Keratinocyte (primary cell): ENCODE measurements at regions of chr6 and their contacts with region 1.

Region 1: GRCh38 chr6:3410385-3411360 is 46.2 kb downstream of the SLC22A23 start:
- DNase-seq: no peak
- H3K4me3 ChIP-seq: no peak overlapping the region
- H3K27ac ChIP-seq: no peak overlapping the region
- H3K4me1 ChIP-seq: no peaks in the 10 kb centered on the region
- H3K27me3 ChIP-seq: no peaks in the 10 kb centered on the region
- CTCF ChIP-seq: peak; percentile 81 to 86 (median 85)

Region 2: DNA sequence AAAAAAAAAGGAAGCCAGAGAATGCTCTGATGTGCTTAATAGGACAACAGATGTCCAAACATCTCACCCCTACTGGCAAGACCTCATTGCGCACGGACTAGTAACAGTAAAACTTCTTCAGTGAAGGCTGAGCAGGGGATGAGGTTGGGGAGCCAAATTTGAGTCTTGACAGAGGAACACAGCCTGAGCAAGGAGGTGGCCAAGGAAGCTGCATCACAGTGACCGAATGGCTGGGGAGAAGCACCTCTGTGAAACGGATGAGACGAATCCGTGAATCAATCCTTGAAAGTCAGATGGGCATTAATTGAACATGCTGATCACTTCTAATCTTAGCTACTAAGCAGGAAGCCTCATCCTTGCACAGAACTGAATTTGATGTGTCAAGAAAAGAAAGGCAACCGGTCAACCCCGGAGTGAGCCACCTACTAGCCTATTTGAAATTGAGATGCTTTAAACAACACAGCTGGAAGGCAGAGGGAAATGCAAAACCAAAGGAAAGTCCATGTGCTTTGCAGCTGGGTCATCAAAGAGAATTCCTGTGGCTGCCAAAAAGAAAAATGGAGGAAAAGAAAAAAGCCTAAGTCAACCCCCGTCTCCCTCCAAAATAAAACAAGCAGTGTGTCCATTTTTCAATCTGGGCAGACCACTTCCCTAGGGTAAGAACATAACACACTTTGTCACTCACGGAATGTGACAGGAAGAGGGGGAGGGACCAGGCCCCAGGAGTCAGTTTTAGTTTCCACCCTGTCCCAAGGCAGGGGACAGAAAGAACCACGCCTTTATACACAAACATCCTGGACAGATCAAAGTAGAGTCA is 311.3 kb after region 1 on chr6:
- dilution Hi-C with region 1: loop called (anchors 25 kb)
- DNase-seq: no peak
- H3K4me3 ChIP-seq: no peak overlapping the region
- H3K27ac ChIP-seq: no peak overlapping the region
- H3K4me1 ChIP-seq: no peaks in the 10 kb centered on the region
- H3K27me3 ChIP-seq: no peaks in the 10 kb centered on the region
- CTCF ChIP-seq: no peak